ENCODE measurements at regions of chr17 and their contacts with region 1.

Region 1: GRCh38 chr17:44775136-44775837 is 16.5 kb downstream of the ADAM11 start:
- DNase-seq: peak; percentile 100
- ATAC-seq: peak; percentile 94
- H3K4me3 Mint-ChIP-seq: peak overlapping the region; percentile 76
- H3K27ac Mint-ChIP-seq: no peak overlapping the region
- H3K4me1 Mint-ChIP-seq: peaks cover 18% of the 10 kb centered on the region
- H3K27me3 Mint-ChIP-seq: peaks cover 22% of the 10 kb centered on the region
- CTCF ChIP-seq: no peak

Region 2: GRCh38 chr17:44752953-44753861 is 22.1 kb before region 1 on chr17:
- CTCF ChIA-PET with region 1: interaction called, 10 read pairs
- POLR2A ChIA-PET with region 1: interaction called, 3 read pairs
- DNase-seq: no peak
- ATAC-seq: no peak
- H3K4me3 Mint-ChIP-seq: no peak overlapping the region
- H3K27ac Mint-ChIP-seq: no peak overlapping the region; the same call in 1 of the 2 replicates
- H3K4me1 Mint-ChIP-seq: no peaks in the 10 kb centered on the region; the same call in 1 of the 2 replicates
- H3K27me3 Mint-ChIP-seq: peaks cover 39% of the 10 kb centered on the region
- CTCF ChIP-seq: no peak

Region 3: GRCh38 chr17:44794851-44795413 is 19.6 kb after region 1 on chr17:
- CTCF ChIA-PET with region 1: interaction called, 22 read pairs
- POLR2A ChIA-PET with region 1: no interaction called
- DNase-seq: no peak
- ATAC-seq: no peak; the same call in 1 of the 2 replicates
- H3K4me3 Mint-ChIP-seq: no peak overlapping the region
- H3K27ac Mint-ChIP-seq: peak overlapping the region; percentile 70
- H3K4me1 Mint-ChIP-seq: peaks cover 22% of the 10 kb centered on the region
- H3K27me3 Mint-ChIP-seq: no peaks in the 10 kb centered on the region
- CTCF ChIP-seq: no peak

Region 4: DNA sequence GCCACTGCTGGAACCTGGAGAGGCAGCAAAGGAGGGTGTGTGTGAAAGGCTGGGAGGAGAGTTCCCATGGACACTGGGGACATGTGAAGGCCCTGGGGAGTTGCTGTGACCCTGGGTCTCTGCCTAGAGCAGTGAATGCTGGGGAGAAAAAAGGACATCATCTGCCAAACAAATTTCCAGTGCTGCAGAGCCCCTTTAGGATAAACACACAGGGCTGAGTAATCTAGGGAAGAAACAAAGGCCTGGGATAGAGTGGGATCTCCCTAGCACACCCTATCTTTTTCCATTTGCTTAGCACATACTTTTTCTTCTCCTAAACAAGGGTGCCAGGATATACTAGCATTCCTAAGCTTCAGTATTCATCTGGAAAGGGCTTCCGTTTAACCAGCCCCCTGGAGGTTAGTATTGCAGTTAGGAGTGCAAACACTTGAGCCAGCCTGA is 69.1 kb after region 1 on chr17:
- CTCF ChIA-PET with region 1: interaction called, 33 read pairs
- POLR2A ChIA-PET with region 1: interaction called, 4 read pairs
- DNase-seq: no peak
- ATAC-seq: peak; percentile 54
- H3K4me3 Mint-ChIP-seq: no peak overlapping the region
- H3K27ac Mint-ChIP-seq: peak overlapping the region; percentile 60; the same call in 1 of the 2 replicates
- H3K4me1 Mint-ChIP-seq: peaks cover 45% of the 10 kb centered on the region
- H3K27me3 Mint-ChIP-seq: no peaks in the 10 kb centered on the region
- CTCF ChIP-seq: no peak

Region 5: DNA sequence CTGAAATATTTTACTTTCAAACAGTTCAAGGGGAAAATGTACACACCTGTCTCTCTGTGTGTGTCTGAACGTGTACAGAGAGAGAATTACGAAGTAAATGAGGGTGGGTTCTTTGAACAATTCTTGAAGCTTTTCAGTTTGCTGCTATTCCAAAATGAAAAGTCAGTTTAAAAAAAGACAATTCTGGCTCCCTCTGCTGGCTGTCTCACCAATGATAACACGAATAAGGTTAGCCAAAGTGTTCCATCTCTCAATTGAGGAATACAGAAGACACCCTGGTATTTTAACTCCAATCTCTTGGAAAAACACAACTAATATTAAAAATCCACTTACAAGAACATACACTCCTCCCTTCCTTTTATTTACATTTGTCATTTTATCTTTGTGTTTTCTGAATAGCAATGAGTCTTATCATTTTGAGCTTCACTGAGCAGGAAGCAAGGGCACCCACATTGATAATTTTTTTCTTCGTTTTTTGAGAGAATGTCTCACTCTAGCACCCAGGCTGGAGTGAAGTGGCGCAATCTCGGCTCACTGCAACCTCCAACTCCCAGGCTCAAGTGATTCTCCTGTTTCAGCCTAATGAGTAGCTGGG is 103.4 kb after region 1 on chr17:
- CTCF ChIA-PET with region 1: interaction called, 32 read pairs
- POLR2A ChIA-PET with region 1: interaction called, 4 read pairs
- DNase-seq: no peak
- ATAC-seq: no peak
- H3K4me3 Mint-ChIP-seq: no peak overlapping the region
- H3K27ac Mint-ChIP-seq: no peak overlapping the region
- H3K4me1 Mint-ChIP-seq: no peaks in the 10 kb centered on the region
- H3K27me3 Mint-ChIP-seq: no peaks in the 10 kb centered on the region
- CTCF ChIP-seq: no peak

Region 6: GRCh38 chr17:44940321-44940720 is 165.0 kb after region 1 on chr17:
- CTCF ChIA-PET with region 1: no interaction called
- POLR2A ChIA-PET with region 1: no interaction called
- DNase-seq: no peak
- ATAC-seq: no peak
- H3K4me3 Mint-ChIP-seq: no peak overlapping the region
- H3K27ac Mint-ChIP-seq: peak overlapping the region; percentile 71
- H3K4me1 Mint-ChIP-seq: peaks cover 13% of the 10 kb centered on the region
- H3K27me3 Mint-ChIP-seq: no peaks in the 10 kb centered on the region
- CTCF ChIP-seq: no peak